ENCODE measurements at regions of chr6 and their contacts with region 1.

Region 1: DNA sequence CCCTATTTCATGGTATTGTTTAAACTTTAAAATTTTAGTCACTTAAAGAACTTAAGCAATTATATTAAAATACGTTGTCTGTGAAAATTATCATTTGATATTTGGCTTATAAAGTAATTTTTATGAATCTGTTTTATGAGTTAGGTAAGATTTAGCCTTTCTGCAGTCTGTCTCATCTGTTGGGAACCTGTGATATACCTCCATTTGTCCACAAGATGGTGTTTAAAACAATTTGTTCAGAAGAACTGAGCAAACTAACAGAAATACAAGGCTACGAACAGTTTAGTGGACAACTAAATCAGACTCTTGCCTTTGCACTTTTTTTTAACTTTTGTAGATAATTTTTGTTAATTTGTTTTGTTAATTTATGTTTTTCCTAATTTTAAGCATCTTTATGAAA is 92.4 kb downstream of the COL9A1 start:
- DNase-seq: no peak
- H3K4me3 ChIP-seq: no peak overlapping the region
- H3K27ac ChIP-seq: no peak overlapping the region
- H3K4me1 ChIP-seq: no peaks in the 10 kb centered on the region
- H3K27me3 ChIP-seq: no peaks in the 10 kb centered on the region
- CTCF ChIP-seq: no peak; the same call in 1 of the 2 replicates

Region 2: DNA sequence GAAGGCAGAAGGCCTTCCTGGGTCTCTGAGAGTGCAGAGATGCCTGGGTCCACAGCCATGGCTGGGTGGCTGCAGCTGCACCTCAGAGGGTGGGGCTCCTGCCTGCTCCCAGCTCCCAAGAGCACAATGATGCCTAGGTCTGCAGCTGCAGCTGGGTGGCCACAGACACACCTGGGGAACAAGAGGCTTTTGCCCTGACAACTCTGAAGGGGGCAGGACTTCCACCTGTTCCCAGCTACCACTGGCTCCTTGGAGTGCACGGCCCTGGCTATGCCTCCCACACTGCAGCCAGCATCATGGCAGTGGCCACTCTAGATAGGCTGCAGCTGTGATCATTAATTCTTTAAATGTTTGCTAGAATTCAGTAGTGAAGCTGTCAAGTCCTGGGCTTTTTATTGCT is 1064.1 kb before region 1 on chr6:
- CTCF ChIA-PET with region 1: no interaction called
- POLR2A ChIA-PET with region 1: interaction called, 12 read pairs
- intact Hi-C with region 1: no loop called
- DNase-seq: no peak
- H3K4me3 ChIP-seq: no peak overlapping the region
- H3K27ac ChIP-seq: no peak overlapping the region
- H3K4me1 ChIP-seq: no peaks in the 10 kb centered on the region
- H3K27me3 ChIP-seq: no peaks in the 10 kb centered on the region
- CTCF ChIP-seq: no peak

Measured in PC-9 (cell line).